ENCODE measurements at regions of chr7 and their contacts with region 1.

Region 1: GRCh38 chr7:142796608-142797385 is 26.0 kb downstream of the PRSS2 start:
- DNase-seq: peak in 2 of 5 donors; percentile 41 to 47
- H3K4me3 ChIP-seq: peak overlapping the region; percentile 84 to 85
- H3K4me3 Mint-ChIP-seq: peak overlapping the region; percentile 93 to 100 (median 99)
- H3K27ac ChIP-seq: peak overlapping the region; percentile 99
- H3K27ac Mint-ChIP-seq: peak overlapping the region; percentile 98 to 100 (median 100)
- H3K4me1 ChIP-seq: peaks cover 68% of the 10 kb centered on the region
- H3K4me1 Mint-ChIP-seq: peaks cover 50 to 79% (median 62%) of the 10 kb centered on the region in 4 donors
- H3K27me3 ChIP-seq: no peaks in the 10 kb centered on the region
- H3K27me3 Mint-ChIP-seq: no peaks in the 10 kb centered on the region

Region 2: DNA sequence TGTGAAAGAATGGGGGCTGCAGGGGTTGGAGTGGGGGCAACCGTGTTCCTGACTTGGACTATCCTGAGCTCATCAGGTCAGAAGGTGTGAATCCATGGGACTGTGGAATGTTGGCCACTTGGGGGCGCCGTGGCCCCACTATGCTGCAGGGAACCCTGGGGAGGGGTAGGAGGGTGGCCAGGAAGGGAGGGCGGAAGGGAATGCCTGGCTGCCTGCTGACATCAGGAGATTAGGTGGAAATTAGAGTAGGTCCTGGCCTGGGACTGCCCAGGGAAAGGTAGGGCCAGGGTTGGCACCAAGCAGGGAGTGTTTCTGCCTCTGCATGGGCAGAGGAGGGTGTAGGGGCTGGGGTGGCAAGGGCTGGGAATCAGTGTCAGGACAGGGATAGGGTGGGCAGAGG is 473.1 kb before region 1 on chr7:
- CTCF ChIA-PET with region 1: interaction called, 5 read pairs
- POLR2A ChIA-PET with region 1: interaction called, 103 read pairs
- intact Hi-C with region 1: loop called (anchors 2 kb)
- DNase-seq: peak in 2 of 5 donors; percentile 31 to 37
- H3K4me3 ChIP-seq: no peak overlapping the region
- H3K4me3 Mint-ChIP-seq: peak overlapping the region in 4 of 8 donors; percentile 6 to 69 (median 18)
- H3K27ac ChIP-seq: no peak overlapping the region
- H3K27ac Mint-ChIP-seq: peak overlapping the region; percentile 56 to 91 (median 71)
- H3K4me1 ChIP-seq: peaks cover 25% of the 10 kb centered on the region
- H3K4me1 Mint-ChIP-seq: peaks cover 13 to 34% (median 19%) of the 10 kb centered on the region in 4 donors
- H3K27me3 ChIP-seq: no peaks in the 10 kb centered on the region
- H3K27me3 Mint-ChIP-seq: peaks cover 0 to 3% of the 10 kb centered on the region in 2 donors

Region 3: DNA sequence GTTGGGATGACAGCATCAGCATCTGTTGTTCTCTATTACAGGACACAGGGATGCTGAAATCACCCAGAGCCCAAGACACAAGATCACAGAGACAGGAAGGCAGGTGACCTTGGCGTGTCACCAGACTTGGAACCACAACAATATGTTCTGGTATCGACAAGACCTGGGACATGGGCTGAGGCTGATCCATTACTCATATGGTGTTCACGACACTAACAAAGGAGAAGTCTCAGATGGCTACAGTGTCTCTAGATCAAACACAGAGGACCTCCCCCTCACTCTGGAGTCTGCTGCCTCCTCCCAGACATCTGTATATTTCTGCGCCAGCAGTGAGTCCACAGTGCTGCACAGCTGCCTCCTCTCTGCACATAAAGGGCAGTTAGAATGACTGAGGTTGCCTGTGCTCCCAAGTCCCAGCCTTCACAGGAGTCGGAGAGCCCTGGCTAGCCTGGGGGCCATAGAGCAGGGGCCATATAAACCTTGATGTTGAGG is 396.7 kb before region 1 on chr7:
- CTCF ChIA-PET with region 1: no interaction called
- POLR2A ChIA-PET with region 1: interaction called, 10 read pairs
- intact Hi-C with region 1: no loop called
- DNase-seq: no peak
- H3K4me3 ChIP-seq: no peak overlapping the region
- H3K4me3 Mint-ChIP-seq: peak overlapping the region in 1 of 8 donors; percentile 17
- H3K27ac ChIP-seq: no peak overlapping the region
- H3K27ac Mint-ChIP-seq: no peak overlapping the region
- H3K4me1 ChIP-seq: no peaks in the 10 kb centered on the region
- H3K4me1 Mint-ChIP-seq: peaks cover 0 to 1% (median 0%) of the 10 kb centered on the region in 4 donors
- H3K27me3 ChIP-seq: no peaks in the 10 kb centered on the region
- H3K27me3 Mint-ChIP-seq: peaks cover 6 to 12% of the 10 kb centered on the region in 2 donors

Region 4: DNA sequence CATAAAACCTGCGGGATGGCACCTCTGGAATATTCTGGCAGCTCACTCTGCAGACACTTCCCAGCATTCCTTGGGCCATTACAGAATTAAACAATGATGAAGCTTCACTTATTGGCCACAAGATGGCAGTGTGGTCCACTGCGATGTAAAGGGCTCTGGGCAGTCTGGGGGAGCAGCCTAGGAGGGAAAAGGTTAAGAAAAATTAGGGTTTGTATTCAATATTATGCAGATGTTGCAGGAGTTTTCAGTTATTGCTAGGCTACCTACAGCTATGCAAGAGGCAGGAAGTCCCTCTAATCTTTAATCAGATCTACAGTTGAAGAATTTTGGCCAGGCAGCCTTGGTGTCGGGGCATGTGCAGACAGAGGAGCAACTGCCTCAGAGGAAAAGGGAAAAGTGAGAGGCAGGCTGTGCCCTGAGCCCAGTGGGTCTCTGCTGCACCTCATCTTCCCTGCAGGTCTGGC is 280.7 kb before region 1 on chr7:
- CTCF ChIA-PET with region 1: no interaction called
- POLR2A ChIA-PET with region 1: interaction called, 13 read pairs
- intact Hi-C with region 1: no loop called
- DNase-seq: peak in 4 of 5 donors; percentile 33 to 46 (median 44)
- H3K4me3 ChIP-seq: no peak overlapping the region
- H3K4me3 Mint-ChIP-seq: peak overlapping the region in 4 of 8 donors; percentile 18 to 75 (median 30)
- H3K27ac ChIP-seq: no peak overlapping the region
- H3K27ac Mint-ChIP-seq: peak overlapping the region in 3 of 7 donors; percentile 9 to 67 (median 57)
- H3K4me1 ChIP-seq: peaks cover 34% of the 10 kb centered on the region
- H3K4me1 Mint-ChIP-seq: peaks cover 12 to 50% (median 29%) of the 10 kb centered on the region in 4 donors
- H3K27me3 ChIP-seq: no peaks in the 10 kb centered on the region
- H3K27me3 Mint-ChIP-seq: no peaks in the 10 kb centered on the region

Region 5: GRCh38 chr7:142587578-142588191 is 209.1 kb before region 1 on chr7:
- CTCF ChIA-PET with region 1: no interaction called
- POLR2A ChIA-PET with region 1: interaction called, 30 read pairs
- intact Hi-C with region 1: no loop called
- DNase-seq: peak in 4 of 5 donors; percentile 25 to 35 (median 31)
- H3K4me3 ChIP-seq: no peak overlapping the region
- H3K4me3 Mint-ChIP-seq: peak overlapping the region in 4 of 8 donors; percentile 31 to 61 (median 44)
- H3K27ac ChIP-seq: no peak overlapping the region
- H3K27ac Mint-ChIP-seq: peak overlapping the region in 2 of 7 donors; percentile 12 to 21
- H3K4me1 ChIP-seq: no peaks in the 10 kb centered on the region
- H3K4me1 Mint-ChIP-seq: peaks cover 3 to 7% (median 4%) of the 10 kb centered on the region in 4 donors
- H3K27me3 ChIP-seq: no peaks in the 10 kb centered on the region
- H3K27me3 Mint-ChIP-seq: no peaks in the 10 kb centered on the region

Region 6: GRCh38 chr7:142711746-142712619 is 84.8 kb before region 1 on chr7:
- CTCF ChIA-PET with region 1: interaction called, 11 read pairs
- POLR2A ChIA-PET with region 1: interaction called, 117 read pairs
- intact Hi-C with region 1: no loop called
- DNase-seq: peak in 3 of 5 donors; percentile 19 to 45 (median 26)
- H3K4me3 ChIP-seq: peak overlapping the region in 1 of 2 donors; percentile 53
- H3K4me3 Mint-ChIP-seq: peak overlapping the region; percentile 87 to 94 (median 89)
- H3K27ac ChIP-seq: peak overlapping the region; percentile 35
- H3K27ac Mint-ChIP-seq: peak overlapping the region; percentile 85 to 95 (median 93)
- H3K4me1 ChIP-seq: peaks cover 78% of the 10 kb centered on the region
- H3K4me1 Mint-ChIP-seq: peaks cover 32 to 80% (median 62%) of the 10 kb centered on the region in 4 donors
- H3K27me3 ChIP-seq: no peaks in the 10 kb centered on the region
- H3K27me3 Mint-ChIP-seq: no peaks in the 10 kb centered on the region